Naive thymus-derived CD4-positive, alpha-beta T cell (primary cell): ENCODE measurements at regions of chr15 and their contacts with region 1.

Region 1: DNA sequence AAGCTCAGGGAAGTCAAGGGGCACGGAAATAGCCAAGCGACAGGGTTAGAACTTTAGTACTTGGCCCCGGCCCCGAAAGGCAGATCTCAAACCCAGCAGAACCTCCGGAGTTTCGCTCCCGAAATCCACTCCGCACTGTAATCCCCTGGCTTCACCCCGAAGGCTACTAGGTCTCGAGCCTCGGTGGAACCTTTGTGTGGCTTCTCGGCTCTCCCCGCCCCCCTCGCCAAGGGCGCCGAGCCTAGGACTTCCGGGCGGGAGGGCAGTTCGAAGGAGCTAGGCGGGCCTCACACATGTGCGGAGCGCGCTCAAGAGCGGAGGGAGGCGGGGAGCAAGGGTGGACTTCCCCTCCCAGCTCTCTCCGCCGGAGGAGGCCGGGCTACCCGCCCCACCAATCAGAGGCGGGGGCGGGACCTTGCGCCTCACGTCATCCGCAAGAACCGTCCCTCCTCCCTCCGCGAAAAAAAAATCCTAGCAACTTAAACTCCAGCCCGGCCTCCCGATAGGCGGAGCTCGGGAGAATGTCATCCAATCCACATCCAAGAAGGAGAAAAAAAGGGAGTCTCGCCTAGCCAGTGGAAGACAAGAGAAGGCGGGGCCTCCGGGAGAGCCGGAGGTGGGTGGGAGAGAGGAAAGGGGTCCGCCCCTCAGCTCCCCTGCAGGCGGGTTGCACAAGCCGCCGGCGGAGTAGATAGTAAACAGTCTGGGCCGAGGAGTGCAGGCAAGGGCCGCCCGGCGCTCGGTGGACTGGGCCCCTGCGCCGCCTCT is 2.4 kb upstream of the SIN3A start:
- DNase-seq: peak; percentile 86 to 100 (median 99)
- ATAC-seq: peak; percentile 54
- H3K4me3 ChIP-seq: peak overlapping the region; percentile 89
- H3K4me3 Mint-ChIP-seq: peak overlapping the region; percentile 91 to 99 (median 96)
- H3K27ac ChIP-seq: peak overlapping the region; percentile 97
- H3K27ac Mint-ChIP-seq: peak overlapping the region; percentile 94 to 99 (median 98)
- H3K4me1 ChIP-seq: peaks cover 17 to 29% of the 10 kb centered on the region in 2 donors
- H3K4me1 Mint-ChIP-seq: peaks cover 19 to 40% (median 30%) of the 10 kb centered on the region in 7 donors
- H3K27me3 ChIP-seq: no peaks in the 10 kb centered on the region
- H3K27me3 Mint-ChIP-seq: peaks cover 0 to 2% (median 0%) of the 10 kb centered on the region in 5 donors

Region 2: DNA sequence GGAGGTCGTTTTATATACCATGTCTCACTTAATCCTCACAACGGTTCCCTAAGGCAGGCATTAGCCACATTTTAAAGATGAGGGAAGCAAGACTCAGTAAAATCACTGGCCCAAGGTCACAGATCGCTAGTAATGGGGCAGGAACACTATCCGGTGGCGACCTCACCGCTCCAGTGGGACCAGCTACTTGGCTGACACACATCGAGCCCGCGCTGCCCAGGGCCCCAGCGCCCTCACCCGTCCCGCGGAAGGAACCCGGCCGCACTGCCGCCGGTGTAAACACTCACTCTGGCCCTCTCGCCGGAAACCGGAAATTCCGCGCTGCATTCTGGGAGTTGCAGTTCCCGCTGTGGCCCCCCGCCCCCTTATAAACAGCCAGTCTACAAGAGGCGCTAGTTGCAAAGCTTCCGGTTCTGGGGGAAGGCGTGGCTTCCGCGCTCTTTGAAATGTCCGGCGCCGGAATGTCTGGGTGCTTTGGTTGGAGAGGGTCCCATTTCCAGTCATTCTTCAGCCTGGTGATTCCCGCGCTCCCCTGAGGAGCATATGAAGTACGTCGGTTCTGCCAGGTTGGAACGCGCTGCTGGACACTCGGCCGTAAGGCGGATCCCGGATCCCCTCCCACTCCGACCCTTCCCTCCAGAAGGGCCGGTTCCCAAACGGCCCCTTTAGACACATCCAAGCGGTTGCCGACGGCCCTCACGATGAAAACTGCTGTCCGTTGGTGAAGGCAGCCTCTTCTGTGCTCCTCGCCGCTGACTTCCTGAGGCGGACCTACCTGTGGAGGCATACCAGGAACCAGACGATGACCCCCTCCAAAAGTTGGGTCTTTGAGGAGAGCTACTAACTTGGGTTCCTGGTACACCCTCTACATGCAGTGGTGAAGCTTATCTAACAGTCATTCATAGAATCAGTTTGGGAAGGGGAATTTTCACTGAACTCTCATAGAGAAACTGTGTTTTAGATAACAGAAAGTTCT is 992.7 kb before region 1 on chr15 and contains the start of gene UBL7:
- CTCF ChIA-PET with region 1: no interaction called
- POLR2A ChIA-PET with region 1: no interaction called
- intact Hi-C with region 1: loop called (anchors 5 kb)
- DNase-seq: peak; percentile 81 to 95 (median 90)
- ATAC-seq: peak; percentile 99
- H3K4me3 ChIP-seq: peak within 1 kb of the TSS; percentile 91
- H3K4me3 Mint-ChIP-seq: peak within 1 kb of the TSS; percentile 88 to 98 (median 92)
- H3K27ac ChIP-seq: peak within 1 kb of the TSS; percentile 86
- H3K27ac Mint-ChIP-seq: peak within 1 kb of the TSS; percentile 78 to 96 (median 92)
- H3K4me1 ChIP-seq: peaks cover 8 to 15% of the 10 kb centered on the region in 2 donors
- H3K4me1 Mint-ChIP-seq: peaks cover 25 to 62% (median 55%) of the 10 kb centered on the region in 7 donors
- H3K27me3 ChIP-seq: no peaks in the 10 kb centered on the region
- H3K27me3 Mint-ChIP-seq: no peaks in the 10 kb centered on the region
- total RNA-seq, gene UBL7: 20.2 to 50.7 (median 40.6) TPM

Region 3: DNA sequence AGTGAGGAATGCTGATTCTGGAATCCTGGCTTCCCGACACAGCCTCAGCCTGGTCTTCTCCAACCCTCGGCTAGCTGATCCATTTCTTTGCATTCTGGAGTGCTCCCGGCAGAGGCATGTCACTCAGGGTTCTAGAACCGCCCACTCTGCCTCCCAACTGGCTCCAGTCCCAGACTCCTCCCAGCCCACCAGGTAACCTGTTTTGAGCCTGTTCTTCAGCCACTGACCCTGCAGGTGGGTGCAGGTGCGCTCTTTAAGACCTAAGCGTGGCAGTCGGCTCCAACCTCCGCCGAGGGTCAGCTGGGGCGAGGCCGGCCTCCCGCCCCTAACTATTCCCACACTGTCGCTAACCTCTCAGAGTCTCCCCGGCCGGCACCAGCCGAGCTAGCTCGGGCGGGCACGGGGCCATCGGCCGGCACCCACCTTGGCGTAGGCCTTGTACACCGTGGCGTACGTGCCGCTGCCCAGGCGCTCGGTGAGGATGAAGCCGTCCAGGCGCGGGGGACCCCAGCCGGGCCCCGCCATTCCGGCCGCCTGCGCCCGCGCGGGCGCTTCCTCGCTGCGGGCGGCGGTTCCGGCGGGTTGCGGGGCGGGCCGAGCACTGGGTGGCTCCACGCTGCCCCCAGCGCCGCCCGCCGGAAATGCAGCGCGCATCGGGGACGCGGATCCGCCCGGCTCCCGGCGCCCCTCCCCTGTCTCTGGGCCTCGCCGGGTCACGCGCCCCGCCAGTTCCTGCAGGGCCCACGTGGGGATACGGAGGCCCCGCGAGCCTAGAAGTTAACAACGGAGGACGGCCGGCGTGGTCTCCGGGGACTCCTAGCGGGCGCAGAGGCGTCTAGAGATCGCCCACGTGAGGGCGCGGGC is 611.1 kb before region 1 on chr15 and contains the start of gene ULK3:
- CTCF ChIA-PET with region 1: no interaction called
- POLR2A ChIA-PET with region 1: interaction called, 3 read pairs
- intact Hi-C with region 1: loop called in 1 of 2 experiments (anchors 10 kb)
- DNase-seq: peak; percentile 89 to 97 (median 93)
- ATAC-seq: peak; percentile 97
- H3K4me3 ChIP-seq: peak within 1 kb of the TSS; percentile 74
- H3K4me3 Mint-ChIP-seq: peak within 1 kb of the TSS; percentile 80 to 95 (median 90)
- H3K27ac ChIP-seq: peak within 1 kb of the TSS; percentile 79
- H3K27ac Mint-ChIP-seq: peak within 1 kb of the TSS; percentile 88 to 95 (median 94)
- H3K4me1 ChIP-seq: peaks cover 40 to 50% of the 10 kb centered on the region in 2 donors
- H3K4me1 Mint-ChIP-seq: peaks cover 26 to 62% (median 50%) of the 10 kb centered on the region in 7 donors
- H3K27me3 ChIP-seq: no peaks in the 10 kb centered on the region
- H3K27me3 Mint-ChIP-seq: no peaks in the 10 kb centered on the region
- total RNA-seq, gene ULK3: 53.2 to 106 (median 59.2) TPM

Region 4: GRCh38 chr15:75347222-75347878 is 106.5 kb before region 1 on chr15:
- CTCF ChIA-PET with region 1: no interaction called
- POLR2A ChIA-PET with region 1: interaction called, 9 read pairs
- intact Hi-C with region 1: loop called in 1 of 2 experiments (anchors 5 kb)
- DNase-seq: peak; percentile 35 to 75 (median 69)
- ATAC-seq: peak; percentile 73
- H3K4me3 ChIP-seq: peak overlapping the region; percentile 59
- H3K4me3 Mint-ChIP-seq: peak overlapping the region; percentile 78 to 95 (median 90)
- H3K27ac ChIP-seq: peak overlapping the region; percentile 66
- H3K27ac Mint-ChIP-seq: peak overlapping the region; percentile 78 to 95 (median 89)
- H3K4me1 ChIP-seq: peaks cover 29 to 30% of the 10 kb centered on the region in 2 donors
- H3K4me1 Mint-ChIP-seq: peaks cover 21 to 45% (median 31%) of the 10 kb centered on the region in 7 donors
- H3K27me3 ChIP-seq: no peaks in the 10 kb centered on the region
- H3K27me3 Mint-ChIP-seq: peaks cover 0 to 26% (median 0%) of the 10 kb centered on the region in 5 donors

Region 5: DNA sequence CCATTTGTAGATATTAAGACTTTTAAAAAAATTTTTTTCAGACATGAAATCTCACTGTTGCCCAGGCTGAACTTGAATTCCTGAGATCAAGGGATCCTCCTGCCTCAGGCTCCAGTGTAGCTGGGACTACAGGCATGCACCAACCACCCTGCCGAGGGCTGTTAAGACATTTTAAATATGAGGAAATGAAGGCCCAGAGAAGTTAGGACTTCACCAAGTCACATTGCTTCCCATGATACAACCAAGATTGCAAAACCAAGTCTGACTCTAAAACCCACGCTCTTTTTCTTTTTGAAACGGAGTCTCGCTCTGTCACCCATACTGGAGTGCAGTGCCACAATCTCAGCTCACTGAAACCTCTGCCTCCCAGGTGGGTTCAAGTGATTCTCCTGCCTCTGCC is 97.2 kb after region 1 on chr15:
- CTCF ChIA-PET with region 1: no interaction called
- POLR2A ChIA-PET with region 1: no interaction called
- intact Hi-C with region 1: no loop called
- DNase-seq: no peak
- ATAC-seq: peak; percentile 57
- H3K4me3 ChIP-seq: no peak overlapping the region
- H3K4me3 Mint-ChIP-seq: no peak overlapping the region
- H3K27ac ChIP-seq: no peak overlapping the region
- H3K27ac Mint-ChIP-seq: peak overlapping the region in 1 of 9 donors; percentile 26
- H3K4me1 ChIP-seq: no peaks in the 10 kb centered on the region
- H3K4me1 Mint-ChIP-seq: peaks cover 0 to 13% (median 5%) of the 10 kb centered on the region in 7 donors
- H3K27me3 ChIP-seq: no peaks in the 10 kb centered on the region
- H3K27me3 Mint-ChIP-seq: no peaks in the 10 kb centered on the region

Region 6: DNA sequence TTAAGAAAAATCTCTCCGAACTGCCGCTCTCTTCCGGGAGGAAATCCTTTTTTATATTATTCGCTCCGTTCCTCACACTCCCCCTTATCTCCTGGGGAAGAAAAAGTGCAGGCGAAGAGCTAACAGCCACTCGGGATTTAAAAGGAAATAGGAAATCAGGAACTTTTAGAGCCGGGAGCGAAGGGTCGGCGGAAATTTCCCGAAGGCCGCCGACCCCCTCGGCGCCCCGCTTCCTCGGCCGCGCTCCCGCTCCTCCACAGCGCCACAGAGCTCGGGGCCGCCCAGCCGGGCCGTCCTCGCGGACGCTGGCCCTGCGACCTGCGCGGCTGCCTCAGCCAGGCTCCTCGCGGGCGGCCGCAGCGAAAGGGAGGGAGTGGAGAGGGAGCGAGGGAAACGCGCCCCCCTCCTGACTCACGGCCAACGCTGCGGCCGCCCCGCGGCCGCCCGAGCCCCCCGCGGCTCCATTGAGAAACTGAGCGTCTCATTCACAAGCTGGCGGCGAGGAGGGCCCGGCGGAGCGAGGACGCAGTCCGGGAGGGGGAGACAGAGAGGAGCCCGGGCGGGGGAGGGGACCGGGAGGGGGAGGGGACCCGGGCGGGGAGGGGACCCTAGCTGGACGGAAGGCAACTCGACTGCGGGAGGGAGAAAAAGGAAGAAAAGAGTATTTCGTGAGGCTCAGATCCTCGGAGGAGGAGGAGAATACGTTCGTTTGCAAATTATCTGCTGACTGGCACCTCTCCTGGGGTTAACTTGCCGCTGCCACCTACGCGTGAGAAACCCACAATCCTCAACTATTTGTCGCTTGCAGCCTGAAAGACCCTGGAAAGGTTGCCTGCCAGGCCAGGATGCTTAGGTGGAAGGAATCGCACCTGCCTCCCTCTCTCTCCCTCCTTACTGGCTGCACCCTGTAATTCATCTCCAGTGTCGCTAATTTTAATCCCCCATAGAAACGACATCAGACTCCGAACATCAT is 125.3 kb after region 1 on chr15 and contains the start of gene PTPN9:
- CTCF ChIA-PET with region 1: no interaction called
- POLR2A ChIA-PET with region 1: interaction called, 18 read pairs
- intact Hi-C with region 1: loop called (anchors 1 to 2 kb)
- DNase-seq: peak; percentile 42 to 74 (median 61)
- ATAC-seq: peak; percentile 90
- H3K4me3 ChIP-seq: peak within 1 kb of the TSS; percentile 77
- H3K4me3 Mint-ChIP-seq: peak within 1 kb of the TSS; percentile 91 to 97 (median 94)
- H3K27ac ChIP-seq: peak within 1 kb of the TSS; percentile 78
- H3K27ac Mint-ChIP-seq: peak within 1 kb of the TSS; percentile 86 to 97 (median 90)
- H3K4me1 ChIP-seq: peaks cover 10 to 16% of the 10 kb centered on the region in 2 donors
- H3K4me1 Mint-ChIP-seq: peaks cover 13 to 27% (median 24%) of the 10 kb centered on the region in 7 donors
- H3K27me3 ChIP-seq: no peaks in the 10 kb centered on the region
- H3K27me3 Mint-ChIP-seq: no peaks in the 10 kb centered on the region
- total RNA-seq, gene PTPN9: 11.2 to 35.6 (median 15.7) TPM

Region 7: GRCh38 chr15:75738647-75739331 is 284.9 kb after region 1 on chr15:
- CTCF ChIA-PET with region 1: no interaction called
- POLR2A ChIA-PET with region 1: no interaction called
- intact Hi-C with region 1: loop called in 1 of 2 experiments (anchors 1 kb)
- DNase-seq: peak; percentile 81 to 92 (median 88)
- ATAC-seq: peak; percentile 97
- H3K4me3 ChIP-seq: peak overlapping the region; percentile 84
- H3K4me3 Mint-ChIP-seq: peak overlapping the region; percentile 83 to 94 (median 88)
- H3K27ac ChIP-seq: peak overlapping the region; percentile 58
- H3K27ac Mint-ChIP-seq: peak overlapping the region in 7 of 9 donors; percentile 51 to 86 (median 80)
- H3K4me1 ChIP-seq: peaks cover 0 to 6% of the 10 kb centered on the region in 2 donors
- H3K4me1 Mint-ChIP-seq: peaks cover 4 to 15% (median 12%) of the 10 kb centered on the region in 7 donors
- H3K27me3 ChIP-seq: no peaks in the 10 kb centered on the region
- H3K27me3 Mint-ChIP-seq: peaks cover 0 to 41% (median 0%) of the 10 kb centered on the region in 5 donors